ENCODE measurements at regions of chrX and their contacts with region 1.

Region 1: GRCh38 chrX:102768987-102769761 is 48.6 kb downstream of the GPRASP3 start:
- DNase-seq: peak; percentile 87
- H3K4me3 Mint-ChIP-seq: peak overlapping the region; percentile 92
- H3K27ac Mint-ChIP-seq: peak overlapping the region; percentile 89
- H3K4me1 Mint-ChIP-seq: peaks cover 9% of the 10 kb centered on the region
- H3K27me3 Mint-ChIP-seq: no peaks in the 10 kb centered on the region

Region 2: DNA sequence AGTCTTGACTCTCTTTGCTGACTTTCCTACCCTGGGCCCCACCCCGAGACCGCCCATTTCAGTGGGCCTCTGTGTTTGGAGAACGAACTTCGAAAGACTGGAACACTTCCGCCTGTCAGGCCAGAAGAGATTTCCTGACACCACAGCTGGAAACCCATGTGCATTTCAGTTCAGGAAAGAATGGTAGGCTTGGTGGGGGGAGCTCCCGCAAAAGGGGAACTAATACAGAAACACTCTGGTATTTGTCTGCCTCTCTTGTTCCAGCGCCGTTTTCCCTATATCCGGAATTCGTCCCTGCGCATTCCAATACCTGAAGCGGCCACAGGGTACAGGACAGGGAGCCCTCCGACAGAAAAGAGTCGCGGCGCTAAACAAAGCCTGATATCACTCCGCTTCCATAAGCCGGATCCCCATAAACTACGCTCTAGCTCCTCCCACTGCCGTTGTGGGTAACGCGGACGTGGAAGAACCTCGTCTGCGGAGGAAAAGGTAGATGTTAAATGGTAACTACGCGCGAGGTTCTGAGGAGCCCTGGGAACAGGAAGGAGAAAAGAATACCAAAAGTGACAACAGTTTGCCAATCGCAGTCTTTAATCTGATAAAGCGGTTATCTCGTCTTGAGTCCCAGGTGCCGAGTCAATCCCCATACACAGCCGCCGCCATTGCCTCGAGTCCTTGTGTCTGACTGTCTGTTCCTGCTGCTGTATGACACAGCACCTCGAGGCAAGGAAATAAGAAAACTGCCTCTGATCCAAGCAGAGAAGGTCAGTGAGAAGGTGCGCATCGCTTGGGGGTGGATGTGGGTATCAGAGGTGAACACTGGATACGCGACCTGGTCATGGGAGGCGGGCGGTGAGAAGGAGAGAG is 169.9 kb before region 1 on chrX and contains the start of gene ARMCX5:
- CTCF ChIA-PET with region 1: no interaction called
- POLR2A ChIA-PET with region 1: no interaction called
- intact Hi-C with region 1: loop called (anchors 1 kb)
- DNase-seq: peak; percentile 76
- H3K4me3 Mint-ChIP-seq: peak within 1 kb of the TSS; percentile 99
- H3K27ac Mint-ChIP-seq: peak within 1 kb of the TSS; percentile 93
- H3K4me1 Mint-ChIP-seq: peaks cover 30% of the 10 kb centered on the region
- H3K27me3 Mint-ChIP-seq: no peaks in the 10 kb centered on the region
- total RNA-seq, gene ARMCX5: 7.5 to 10.0 TPM

Region 3: DNA sequence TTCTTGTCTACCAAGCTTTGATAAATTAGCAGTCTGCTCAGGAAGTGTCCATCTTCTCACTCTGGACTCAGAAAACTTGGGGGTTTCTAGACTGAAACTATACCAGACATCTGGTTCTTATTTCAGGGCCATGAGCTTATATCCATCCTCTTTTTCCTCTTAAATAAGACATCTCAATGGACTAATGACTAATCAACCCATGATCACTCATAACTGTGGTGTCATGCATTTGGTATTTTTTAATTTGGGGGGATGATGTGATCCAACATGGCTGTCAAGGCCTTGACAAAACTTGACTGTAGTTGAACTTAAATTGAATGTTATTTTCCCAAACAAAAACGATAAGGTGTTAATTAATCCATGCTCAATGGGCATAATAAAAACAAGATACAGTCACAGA is 39.2 kb after region 1 on chrX:
- CTCF ChIA-PET with region 1: no interaction called
- POLR2A ChIA-PET with region 1: no interaction called
- intact Hi-C with region 1: no loop called
- DNase-seq: no peak
- H3K4me3 Mint-ChIP-seq: no peak overlapping the region
- H3K27ac Mint-ChIP-seq: no peak overlapping the region
- H3K4me1 Mint-ChIP-seq: no peaks in the 10 kb centered on the region
- H3K27me3 Mint-ChIP-seq: no peaks in the 10 kb centered on the region

Measured in activated CD4-positive, alpha-beta memory T cell treated with anti-CD3 and anti-CD28 coated beads for 36 hours (primary cell).